Dorsolateral prefrontal cortex (tissue), 120 donors: ENCODE measurements at regions of chr2 and their contacts with region 1.

Region 1: GRCh38 chr2:68762665-68763064 is 28.1 kb downstream of the ARHGAP25 start:
- DNase-seq: no peak
- H3K4me3 ChIP-seq: no peak overlapping the region
- H3K27ac ChIP-seq: peak overlapping the region in 1 of 59 donors; percentile 10
- H3K27me3 ChIP-seq: no peaks in the 10 kb centered on the region
- CTCF ChIP-seq: no peak

Region 2: GRCh38 chr2:68837164-68837860 is 74.6 kb after region 1 on chr2:
- intact Hi-C with region 1: loop called in 1 of 2 experiments (anchors 5 kb)
- DNase-seq: peak in 2 of 10 donors; percentile 13 to 53
- H3K4me3 ChIP-seq: no peak overlapping the region
- H3K27ac ChIP-seq: peak overlapping the region in 1 of 59 donors; percentile 14
- H3K27me3 ChIP-seq: no peaks in the 10 kb centered on the region
- CTCF ChIP-seq: peak in 50 of 56 donors; percentile 11 to 64 (median 44)